ENCODE measurements at regions of chr15 and their contacts with region 1.

Region 1: DNA sequence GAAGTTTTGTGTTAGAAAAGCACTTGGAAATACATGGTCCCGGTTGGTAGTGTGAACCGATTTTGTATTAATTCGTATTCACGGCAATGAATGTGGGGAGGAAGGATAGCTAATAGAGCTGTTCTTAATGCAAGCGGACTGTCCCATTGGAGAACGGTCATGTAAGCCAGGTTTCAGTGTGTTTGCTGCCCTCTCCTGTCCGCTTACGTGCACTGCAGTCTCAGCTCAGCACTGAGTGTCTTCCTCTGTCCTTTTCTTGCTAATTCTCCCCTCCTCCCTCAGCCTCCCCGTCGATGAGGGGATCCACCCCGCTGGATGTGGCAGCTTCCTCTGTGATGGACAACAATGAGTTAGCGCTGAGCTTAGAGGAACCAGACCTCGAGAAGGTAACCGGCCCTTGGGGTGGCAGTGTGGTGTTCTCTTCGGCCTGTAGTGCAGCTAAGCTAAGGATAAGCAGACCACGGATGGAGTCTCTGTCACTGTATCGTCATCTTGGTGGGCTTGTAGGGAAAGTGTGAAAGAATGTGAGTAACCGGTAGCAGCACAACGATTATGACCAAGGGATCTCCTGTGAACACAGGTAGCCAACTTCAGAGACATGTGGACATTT is 267.5 kb upstream of the CHRM5 start:
- ATAC-seq: peak; percentile 79 to 98 (median 94)
- H3K4me3 ChIP-seq: no peak overlapping the region
- H3K27ac ChIP-seq: no peak overlapping the region
- H3K4me1 ChIP-seq: no peaks in the 10 kb centered on the region

Region 2: GRCh38 chr15:33086507-33087121 is 614.2 kb before region 1 on chr15:
- in situ Hi-C with region 1: loop called in 2 of 9 experiments (anchors 25 kb)
- ATAC-seq: peak in 4 of 8 experiments; percentile 48 to 66 (median 57)
- H3K4me3 ChIP-seq: no peak overlapping the region
- H3K27ac ChIP-seq: no peak overlapping the region
- H3K4me1 ChIP-seq: peaks cover 15 to 18% of the 10 kb centered on the region in 2 donors

Region 3: GRCh38 chr15:33226559-33227181 is 474.1 kb before region 1 on chr15:
- in situ Hi-C with region 1: loop called in 1 of 9 experiments (anchors 25 kb)
- ATAC-seq: peak in 3 of 8 experiments; percentile 61 to 81 (median 66)
- H3K4me3 ChIP-seq: no peak overlapping the region
- H3K27ac ChIP-seq: no peak overlapping the region
- H3K4me1 ChIP-seq: no peaks in the 10 kb centered on the region

Region 4: DNA sequence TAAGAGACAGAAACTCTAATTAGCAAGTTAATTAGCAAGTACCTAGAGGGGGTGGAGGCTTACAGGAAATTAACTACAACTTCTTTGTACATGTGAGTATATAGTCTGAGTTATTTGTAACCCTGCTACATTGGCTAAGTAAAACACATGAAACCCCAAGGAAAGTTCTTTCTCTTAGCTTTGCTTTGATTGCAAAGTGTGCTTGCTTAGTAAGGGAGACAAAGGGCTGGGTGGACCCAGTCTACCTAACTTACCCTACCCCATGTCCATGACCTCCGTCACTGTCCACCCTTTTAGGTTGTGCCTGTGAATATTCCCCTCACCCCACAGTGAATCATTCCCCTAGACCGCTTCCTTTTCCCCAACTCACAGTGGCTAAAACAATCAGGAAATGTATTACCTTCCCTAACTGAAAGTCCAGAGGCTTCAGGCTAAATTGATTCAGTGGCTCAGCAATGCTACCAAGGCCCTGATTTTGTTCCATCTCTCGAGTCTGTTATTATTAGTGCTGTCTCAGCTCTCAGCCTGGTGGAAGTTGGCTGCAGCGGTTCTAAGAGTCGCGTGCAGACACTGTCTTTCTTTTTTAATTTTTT is 421.1 kb before region 1 on chr15:
- in situ Hi-C with region 1: loop called in 6 of 9 experiments (anchors 10 to 25 kb)
- ATAC-seq: peak in 2 of 8 experiments; percentile 51 to 65
- H3K4me3 ChIP-seq: no peak overlapping the region
- H3K27ac ChIP-seq: no peak overlapping the region
- H3K4me1 ChIP-seq: no peaks in the 10 kb centered on the region

Region 5: DNA sequence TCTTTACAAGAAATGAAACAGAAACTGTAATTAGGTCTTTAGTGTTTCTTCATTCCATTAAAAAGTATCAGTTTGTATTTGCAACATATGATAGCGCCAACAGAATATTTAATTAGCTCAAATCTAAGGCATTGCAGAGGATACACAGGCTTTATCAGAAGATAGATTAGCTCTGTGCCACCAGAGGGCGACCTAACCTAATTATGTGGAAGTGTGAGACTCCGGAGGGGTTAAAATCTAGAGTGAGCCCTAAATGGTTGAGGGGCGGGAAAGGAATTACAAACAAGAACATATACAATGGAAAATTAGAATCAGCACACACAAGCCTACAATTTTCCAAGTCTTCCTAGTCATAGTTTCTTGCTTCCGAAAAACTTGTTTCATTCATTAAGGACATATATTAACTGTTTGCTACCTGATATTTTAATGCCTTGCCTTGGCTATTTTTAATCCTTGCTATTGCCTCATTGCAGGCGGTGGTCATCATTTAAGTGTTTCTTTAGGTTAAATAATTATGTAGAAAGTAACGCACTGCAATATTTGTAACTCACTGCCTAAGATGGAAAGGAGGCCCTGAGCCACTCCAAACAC is 408.0 kb before region 1 on chr15:
- in situ Hi-C with region 1: loop called in 7 of 9 experiments (anchors 10 to 25 kb)
- ATAC-seq: peak; percentile 48 to 90 (median 75)
- H3K4me3 ChIP-seq: no peak overlapping the region
- H3K27ac ChIP-seq: no peak overlapping the region
- H3K4me1 ChIP-seq: no peaks in the 10 kb centered on the region

Region 6: GRCh38 chr15:33309602-33310276 is 391.1 kb before region 1 on chr15:
- in situ Hi-C with region 1: loop called in 1 of 9 experiments (anchors 25 kb)
- ATAC-seq: peak in 1 of 8 experiments; percentile 68
- H3K4me3 ChIP-seq: no peak overlapping the region
- H3K27ac ChIP-seq: no peak overlapping the region
- H3K4me1 ChIP-seq: peaks cover 7 to 11% of the 10 kb centered on the region in 2 donors

Region 7: GRCh38 chr15:33490703-33491102 is 210.1 kb before region 1 on chr15:
- in situ Hi-C with region 1: no loop called
- ATAC-seq: no peak
- H3K4me3 ChIP-seq: no peak overlapping the region
- H3K27ac ChIP-seq: no peak overlapping the region
- H3K4me1 ChIP-seq: no peaks in the 10 kb centered on the region

Region 8: DNA sequence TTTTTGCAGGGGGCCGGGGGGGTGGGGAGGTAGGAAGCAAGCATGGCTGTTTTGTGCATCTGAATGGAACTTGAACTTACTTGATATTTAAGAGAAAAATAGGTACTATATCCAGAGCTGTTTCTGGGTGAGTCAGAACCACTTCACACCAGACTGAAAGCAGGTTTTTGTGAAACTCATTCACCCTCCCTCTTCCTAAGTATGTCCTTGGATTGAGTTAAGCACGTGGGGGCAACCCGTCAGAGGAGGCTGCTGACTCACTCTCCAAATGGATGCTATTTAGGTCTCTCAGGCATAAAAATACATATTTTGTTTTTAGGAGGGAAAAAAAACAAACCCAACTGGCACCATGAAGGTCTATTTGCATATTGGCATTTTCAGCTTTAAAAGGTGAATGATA is 119.8 kb before region 1 on chr15:
- in situ Hi-C with region 1: no loop called
- ATAC-seq: peak in 7 of 8 experiments; percentile 40 to 84 (median 80)
- H3K4me3 ChIP-seq: no peak overlapping the region
- H3K27ac ChIP-seq: no peak overlapping the region
- H3K4me1 ChIP-seq: no peaks in the 10 kb centered on the region

Measured in motor neuron (in vitro differentiated cells).